Stomach (tissue), 19 donors: ENCODE measurements at regions of chr18 and their contacts with region 1.

Region 1: DNA sequence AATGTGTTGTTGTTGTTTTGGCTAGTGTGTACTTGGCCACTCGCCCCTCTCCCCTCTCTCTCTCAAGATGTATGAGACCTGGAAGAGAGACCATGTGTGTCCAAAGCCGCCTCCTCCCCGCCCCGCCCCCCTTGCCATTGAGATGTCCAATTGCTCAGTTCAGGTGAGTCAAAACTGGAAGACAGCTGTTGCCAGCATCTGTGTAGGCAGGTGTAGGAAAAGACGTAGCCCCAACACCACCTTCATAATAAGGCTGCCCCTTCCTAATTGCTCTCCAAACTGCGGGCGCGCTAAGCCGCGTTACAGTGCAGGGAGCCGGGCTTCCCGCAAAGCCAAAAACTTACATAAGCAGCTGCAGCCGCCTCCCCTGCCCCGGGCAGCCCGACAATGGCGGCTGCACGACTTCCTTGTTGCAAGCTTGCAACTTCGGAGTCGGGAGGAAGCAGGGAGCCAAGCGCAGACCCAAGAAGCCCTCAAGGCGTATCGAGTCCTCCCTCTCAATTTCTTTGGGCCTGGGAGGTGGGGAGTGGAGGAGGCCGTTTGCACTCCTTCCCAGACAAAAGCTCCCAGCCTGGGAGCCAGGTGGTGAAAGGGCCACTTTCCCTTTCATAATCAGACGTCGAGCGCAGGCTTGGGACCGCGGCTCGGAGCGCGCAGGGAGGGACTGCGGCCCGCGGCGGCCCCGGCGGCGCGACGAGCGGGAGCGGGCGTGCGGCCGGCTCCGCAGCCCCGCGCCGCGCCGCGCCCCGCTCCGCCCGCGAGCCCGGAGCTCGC is 882 bp downstream of the ZBTB14 start:
- DNase-seq: peak; percentile 61 to 73
- H3K4me3 ChIP-seq: peak overlapping the region; percentile 73 to 94 (median 86)
- H3K27ac ChIP-seq: peak overlapping the region; percentile 91 to 100 (median 98)
- H3K4me1 ChIP-seq: peaks cover 0 to 26% (median 19%) of the 10 kb centered on the region in 4 donors
- H3K27me3 ChIP-seq: no peaks in the 10 kb centered on the region
- CTCF ChIP-seq: no peak
- EP300 ChIP-seq: no peak
- POLR2A ChIP-seq: no peak

Region 2: GRCh38 chr18:5244941-5245340 is 49.7 kb before region 1 on chr18:
- intact Hi-C with region 1: loop called (anchors 5 kb)
- DNase-seq: no peak
- H3K4me3 ChIP-seq: no peak overlapping the region
- H3K27ac ChIP-seq: no peak overlapping the region
- H3K4me1 ChIP-seq: peaks cover 0 to 15% (median 12%) of the 10 kb centered on the region in 4 donors
- H3K27me3 ChIP-seq: no peaks in the 10 kb centered on the region
- CTCF ChIP-seq: no peak
- EP300 ChIP-seq: no peak
- POLR2A ChIP-seq: no peak